CD8-positive, alpha-beta memory T cell (primary cell): ENCODE measurements at regions of chr7 and their contacts with region 1.

Region 1: DNA sequence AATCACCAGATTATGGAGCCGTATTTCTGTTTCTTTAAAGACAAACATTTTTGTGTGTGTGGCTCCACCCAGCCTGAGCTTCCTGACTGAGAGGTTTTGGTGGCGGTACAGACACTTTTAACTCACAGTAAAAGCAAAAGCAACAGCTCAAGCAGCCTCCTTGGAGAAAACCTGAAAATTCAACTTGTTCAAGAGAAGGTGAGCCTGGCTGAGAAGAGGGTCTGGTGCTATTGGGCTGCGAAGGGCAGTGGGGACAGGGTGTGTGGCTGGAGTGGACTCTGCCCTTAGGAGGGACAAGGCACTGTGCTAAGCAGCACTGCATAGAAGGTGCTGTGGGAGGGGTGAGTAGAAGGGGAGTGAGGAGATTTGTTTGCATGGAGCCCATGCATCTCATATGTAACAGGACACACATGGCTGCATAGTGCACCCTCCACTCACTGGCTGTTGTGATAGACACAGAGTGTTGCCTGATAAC is at the start of gene GIMAP7:
- DNase-seq: peak; percentile 7 to 84 (median 68)
- H3K4me3 ChIP-seq: peak within 1 kb of the TSS; percentile 97
- H3K4me3 Mint-ChIP-seq: peak within 1 kb of the TSS; percentile 98 to 100 (median 100)
- H3K27ac ChIP-seq: peak within 1 kb of the TSS; percentile 77
- H3K27ac Mint-ChIP-seq: peak within 1 kb of the TSS; percentile 90 to 99 (median 96)
- H3K4me1 ChIP-seq: peaks cover 46% of the 10 kb centered on the region
- H3K4me1 Mint-ChIP-seq: peaks cover 45 to 49% (median 49%) of the 10 kb centered on the region in 3 donors
- H3K27me3 ChIP-seq: no peaks in the 10 kb centered on the region
- H3K27me3 Mint-ChIP-seq: no peaks in the 10 kb centered on the region
- total RNA-seq, gene GIMAP7: 47.3 to 51.4 TPM

Region 2: GRCh38 chr7:150481186-150481920 is 33.4 kb before region 1 on chr7:
- CTCF ChIA-PET with region 1: interaction called, 13 read pairs
- POLR2A ChIA-PET with region 1: interaction called, 14 read pairs
- DNase-seq: peak; percentile 32 to 78 (median 68)
- H3K4me3 ChIP-seq: peak overlapping the region; percentile 40
- H3K4me3 Mint-ChIP-seq: peak overlapping the region; percentile 72 to 91 (median 88)
- H3K27ac ChIP-seq: peak overlapping the region; percentile 75
- H3K27ac Mint-ChIP-seq: peak overlapping the region; percentile 94 to 100 (median 98)
- H3K4me1 ChIP-seq: peaks cover 98% of the 10 kb centered on the region
- H3K4me1 Mint-ChIP-seq: peaks cover 89 to 99% (median 98%) of the 10 kb centered on the region in 3 donors
- H3K27me3 ChIP-seq: no peaks in the 10 kb centered on the region
- H3K27me3 Mint-ChIP-seq: peaks cover 0 to 1% of the 10 kb centered on the region in 2 donors

Region 3: DNA sequence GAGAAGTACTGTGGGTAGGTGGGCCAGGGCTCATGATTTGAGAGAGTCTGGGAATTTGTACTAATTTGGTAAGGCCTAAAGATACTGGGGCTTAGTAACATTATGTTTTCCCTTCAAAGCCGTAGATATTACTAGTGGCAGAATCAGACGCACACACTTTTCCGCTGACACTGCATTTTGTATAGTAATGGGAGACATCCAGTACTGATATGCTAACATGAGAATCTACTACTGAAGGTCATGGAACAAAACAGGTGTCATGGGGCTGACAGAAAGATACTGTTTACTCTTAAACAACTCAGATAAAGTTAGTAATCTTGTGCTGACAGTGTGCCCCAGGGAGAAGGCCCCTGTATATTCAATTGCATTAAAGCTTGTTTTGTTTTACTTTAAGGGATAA is 11.2 kb before region 1 on chr7:
- CTCF ChIA-PET with region 1: interaction called, 11 read pairs
- POLR2A ChIA-PET with region 1: interaction called, 5 read pairs
- DNase-seq: no peak
- H3K4me3 ChIP-seq: peak overlapping the region; percentile 5
- H3K4me3 Mint-ChIP-seq: peak overlapping the region in 6 of 7 donors; percentile 56 to 73 (median 68)
- H3K27ac ChIP-seq: peak overlapping the region; percentile 10
- H3K27ac Mint-ChIP-seq: peak overlapping the region; percentile 52 to 91 (median 84)
- H3K4me1 ChIP-seq: peaks cover 58% of the 10 kb centered on the region
- H3K4me1 Mint-ChIP-seq: peaks cover 83 to 94% (median 94%) of the 10 kb centered on the region in 3 donors
- H3K27me3 ChIP-seq: no peaks in the 10 kb centered on the region
- H3K27me3 Mint-ChIP-seq: no peaks in the 10 kb centered on the region

Region 4: GRCh38 chr7:150567169-150567568 is 52.4 kb after region 1 on chr7 and contains the start of gene GIMAP4:
- CTCF ChIA-PET with region 1: interaction called, 19 read pairs
- POLR2A ChIA-PET with region 1: interaction called, 3 read pairs
- DNase-seq: peak in 2 of 5 donors; percentile 36 to 56
- H3K4me3 ChIP-seq: peak within 1 kb of the TSS; percentile 90
- H3K4me3 Mint-ChIP-seq: peak within 1 kb of the TSS; percentile 97 to 100 (median 100)
- H3K27ac ChIP-seq: peak within 1 kb of the TSS; percentile 67
- H3K27ac Mint-ChIP-seq: peak within 1 kb of the TSS; percentile 86 to 99 (median 98)
- H3K4me1 ChIP-seq: peaks cover 74% of the 10 kb centered on the region
- H3K4me1 Mint-ChIP-seq: peaks cover 72 to 86% (median 85%) of the 10 kb centered on the region in 3 donors
- H3K27me3 ChIP-seq: no peaks in the 10 kb centered on the region
- H3K27me3 Mint-ChIP-seq: peaks cover 0 to 4% of the 10 kb centered on the region in 2 donors
- total RNA-seq, gene GIMAP4: 57.3 to 59.3 TPM

Region 5: DNA sequence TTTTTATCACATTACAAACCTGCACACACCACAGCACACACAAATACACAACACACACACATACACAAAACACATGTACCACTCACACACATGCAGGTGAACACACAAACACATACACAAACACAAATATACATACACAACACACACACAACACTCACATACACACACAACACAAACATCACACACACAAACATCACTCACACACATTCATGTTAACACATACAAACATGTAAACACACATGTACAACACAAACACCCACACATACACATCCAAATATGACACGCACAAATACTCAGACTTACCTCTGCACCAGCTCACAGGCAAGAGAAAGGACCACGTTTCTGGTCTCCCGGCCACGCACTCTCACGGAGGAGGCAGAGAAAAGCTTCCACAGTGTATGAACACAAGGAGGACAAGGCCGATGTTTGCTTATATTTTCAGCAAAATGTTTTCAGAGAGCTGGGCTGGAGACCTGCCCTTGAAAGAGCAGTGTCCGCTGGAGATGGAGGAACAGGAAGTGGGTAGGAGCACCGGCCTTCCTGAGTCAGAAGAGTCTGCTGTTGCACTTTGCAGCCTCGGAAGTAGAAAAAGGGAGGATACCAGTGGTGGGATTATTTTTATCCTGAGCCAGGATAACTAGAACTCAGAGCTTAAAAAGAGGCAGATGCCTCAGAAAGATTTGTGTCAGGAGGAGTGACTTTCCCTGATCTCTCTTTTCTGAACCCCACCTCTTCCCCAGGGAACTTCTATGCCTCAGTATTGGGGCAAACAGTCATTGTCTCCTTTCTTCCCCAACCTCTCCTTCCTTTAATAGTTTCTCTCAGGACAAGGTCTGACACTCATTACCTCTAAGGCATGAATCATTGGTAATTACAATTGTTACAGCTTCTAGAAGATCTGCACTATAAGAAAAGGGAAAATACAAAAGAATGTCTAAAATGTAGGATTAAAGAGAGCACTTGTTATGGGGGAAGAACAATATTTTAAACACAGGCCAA is 117.4 kb after region 1 on chr7 and contains the start of gene GIMAP6:
- CTCF ChIA-PET with region 1: interaction called, 13 read pairs
- POLR2A ChIA-PET with region 1: interaction called, 4 read pairs
- DNase-seq: peak; percentile 10 to 59 (median 47)
- H3K4me3 ChIP-seq: peak within 1 kb of the TSS; percentile 67
- H3K4me3 Mint-ChIP-seq: peak within 1 kb of the TSS; percentile 95 to 100 (median 97)
- H3K27ac ChIP-seq: peak within 1 kb of the TSS; percentile 47
- H3K27ac Mint-ChIP-seq: peak within 1 kb of the TSS; percentile 90 to 98 (median 94)
- H3K4me1 ChIP-seq: peaks cover 67% of the 10 kb centered on the region
- H3K4me1 Mint-ChIP-seq: peaks cover 83 to 89% (median 87%) of the 10 kb centered on the region in 3 donors
- H3K27me3 ChIP-seq: no peaks in the 10 kb centered on the region
- H3K27me3 Mint-ChIP-seq: no peaks in the 10 kb centered on the region
- total RNA-seq, gene GIMAP6: 44.9 to 45.8 TPM

Region 6: GRCh38 chr7:150703209-150703608 is 188.4 kb after region 1 on chr7:
- CTCF ChIA-PET with region 1: no interaction called
- POLR2A ChIA-PET with region 1: no interaction called
- DNase-seq: no peak
- H3K4me3 ChIP-seq: no peak overlapping the region
- H3K4me3 Mint-ChIP-seq: no peak overlapping the region
- H3K27ac ChIP-seq: no peak overlapping the region
- H3K27ac Mint-ChIP-seq: peak overlapping the region in 1 of 8 donors; percentile 23
- H3K4me1 ChIP-seq: no peaks in the 10 kb centered on the region
- H3K4me1 Mint-ChIP-seq: peaks cover 8 to 20% (median 12%) of the 10 kb centered on the region in 3 donors
- H3K27me3 ChIP-seq: no peaks in the 10 kb centered on the region
- H3K27me3 Mint-ChIP-seq: no peaks in the 10 kb centered on the region

Region 7: GRCh38 chr7:150753826-150754603 is 239.2 kb after region 1 on chr7:
- CTCF ChIA-PET with region 1: interaction called, 21 read pairs
- POLR2A ChIA-PET with region 1: interaction called, 16 read pairs
- DNase-seq: no peak
- H3K4me3 ChIP-seq: peak overlapping the region; percentile 15
- H3K4me3 Mint-ChIP-seq: peak overlapping the region in 6 of 7 donors; percentile 33 to 66 (median 54)
- H3K27ac ChIP-seq: no peak overlapping the region
- H3K27ac Mint-ChIP-seq: peak overlapping the region; percentile 75 to 97 (median 88)
- H3K4me1 ChIP-seq: peaks cover 79% of the 10 kb centered on the region
- H3K4me1 Mint-ChIP-seq: peaks cover 65 to 82% (median 81%) of the 10 kb centered on the region in 3 donors
- H3K27me3 ChIP-seq: no peaks in the 10 kb centered on the region
- H3K27me3 Mint-ChIP-seq: peaks cover 0 to 3% of the 10 kb centered on the region in 2 donors